Adrenal gland (tissue), 19 donors: ENCODE measurements at regions of chr20 and their contacts with region 1.

Region 1: GRCh38 chr20:35085477-35086225 is 7.0 kb downstream of the TRPC4AP start:
- DNase-seq: no peak
- H3K4me3 ChIP-seq: no peak overlapping the region
- H3K27ac ChIP-seq: no peak overlapping the region
- H3K4me1 ChIP-seq: peaks cover 20 to 46% of the 10 kb centered on the region in 2 donors
- H3K27me3 ChIP-seq: no peaks in the 10 kb centered on the region
- CTCF ChIP-seq: no peak
- POLR2A ChIP-seq: no peak

Region 2: DNA sequence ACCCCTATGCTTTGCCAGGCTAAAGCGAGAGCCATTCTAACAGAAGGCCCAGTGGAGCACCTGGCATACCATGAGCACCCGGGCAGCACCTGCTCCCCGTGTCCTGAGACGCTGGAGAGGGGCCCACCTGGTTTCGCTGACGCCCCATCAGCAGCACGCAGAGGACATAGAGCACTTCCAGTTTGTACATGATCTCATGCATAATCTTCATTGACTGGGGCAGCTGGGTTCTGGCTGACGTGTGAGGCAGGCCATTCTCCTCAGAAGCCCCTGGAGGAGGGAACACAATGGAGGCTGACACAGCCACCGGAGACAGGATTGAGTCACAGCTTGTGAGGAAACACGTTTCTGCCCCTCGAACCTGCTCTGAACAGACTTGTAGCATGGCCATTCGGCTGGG is 64.6 kb before region 1 on chr20:
- intact Hi-C with region 1: loop called in 1 of 2 experiments (anchors 10 kb)
- DNase-seq: peak in 1 of 7 donors; percentile 8
- H3K4me3 ChIP-seq: no peak overlapping the region
- H3K27ac ChIP-seq: peak overlapping the region in 1 of 5 donors; percentile 24
- H3K4me1 ChIP-seq: peaks cover 0 to 27% of the 10 kb centered on the region in 2 donors
- H3K27me3 ChIP-seq: no peaks in the 10 kb centered on the region
- CTCF ChIP-seq: no peak
- POLR2A ChIP-seq: no peak

Region 3: DNA sequence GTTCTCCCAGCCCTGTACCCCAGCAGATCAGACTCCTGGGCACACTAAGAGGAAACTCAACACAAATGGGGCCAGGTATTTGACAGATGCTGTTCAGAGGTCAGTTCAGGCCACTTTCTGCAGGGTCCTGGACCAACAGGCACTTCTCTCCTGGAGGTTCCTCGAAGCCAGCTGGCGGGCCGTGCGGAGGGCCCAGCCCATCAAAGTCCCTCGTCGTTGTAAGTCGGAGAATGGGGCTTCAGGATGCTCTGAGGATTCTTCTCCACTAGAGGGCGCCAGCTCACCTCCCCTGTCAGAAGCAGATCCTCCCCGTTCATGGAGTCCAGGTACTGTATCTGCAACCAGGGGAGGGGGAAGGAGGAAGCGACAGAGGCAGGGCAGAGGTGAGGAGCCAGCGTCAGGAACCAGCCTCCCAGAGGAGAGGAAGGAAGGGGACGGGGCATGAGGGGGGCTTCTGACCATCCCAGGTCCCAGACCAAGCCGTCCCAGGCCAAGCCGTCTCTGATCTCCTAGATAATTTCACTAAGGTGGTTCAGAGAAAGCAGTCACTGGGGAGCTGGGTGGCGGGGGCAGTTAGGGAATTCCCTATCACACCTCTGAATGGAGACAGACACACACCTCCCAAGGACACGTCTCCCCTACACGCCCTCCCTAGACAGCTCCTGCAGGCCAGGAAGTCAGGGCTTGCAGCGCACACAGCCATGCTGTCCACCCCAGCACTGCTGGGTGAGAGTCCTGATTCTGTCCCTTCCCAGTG is 218.3 kb after region 1 on chr20:
- intact Hi-C with region 1: no loop called
- DNase-seq: peak; percentile 81 to 95 (median 87)
- H3K4me3 ChIP-seq: no peak overlapping the region
- H3K27ac ChIP-seq: peak overlapping the region in 1 of 5 donors; percentile 59
- H3K4me1 ChIP-seq: peaks cover 10 to 20% of the 10 kb centered on the region in 2 donors
- H3K27me3 ChIP-seq: no peaks in the 10 kb centered on the region
- CTCF ChIP-seq: peak; percentile 88 to 94 (median 91)
- POLR2A ChIP-seq: no peak